ENCODE measurements at regions of chr22 and their contacts with region 1.

Region 1: DNA sequence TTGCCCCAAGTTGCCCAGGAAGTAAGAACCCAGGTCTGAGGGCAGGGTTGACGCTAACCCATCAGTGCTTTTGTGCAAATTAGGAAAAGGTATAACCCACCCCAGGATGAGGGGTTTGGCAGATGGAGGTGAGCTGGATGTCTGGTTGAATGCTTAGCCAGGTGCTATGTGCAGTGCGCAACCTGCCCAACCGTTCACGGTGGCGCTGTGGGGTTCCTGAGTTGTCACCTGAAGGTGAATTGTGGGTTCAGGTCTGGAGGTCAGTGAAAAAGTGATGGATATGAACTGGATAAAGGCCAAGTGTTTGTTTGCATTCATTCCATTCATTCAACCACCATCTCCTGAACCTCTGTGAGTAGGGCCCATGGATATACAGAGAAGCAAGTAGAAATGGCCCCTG is 14.3 kb upstream of the LGALS2 start:
- DNase-seq: peak in 1 of 10 donors; percentile 8
- ATAC-seq: no peak
- H3K4me3 Mint-ChIP-seq: no peak overlapping the region
- H3K27ac Mint-ChIP-seq: no peak overlapping the region
- H3K4me1 Mint-ChIP-seq: peaks cover 8 to 15% (median 13%) of the 10 kb centered on the region in 4 donors
- H3K27me3 Mint-ChIP-seq: no peaks in the 10 kb centered on the region

Region 2: GRCh38 chr22:37538590-37539357 is 55.5 kb before region 1 on chr22:
- POLR2A ChIA-PET with region 1: interaction called, 20 read pairs
- DNase-seq: peak; percentile 80 to 93 (median 86)
- ATAC-seq: peak; percentile 99 to 100
- H3K4me3 Mint-ChIP-seq: peak overlapping the region in 6 of 10 donors; percentile 37 to 81 (median 62)
- H3K27ac Mint-ChIP-seq: peak overlapping the region in 2 of 10 donors; percentile 21 to 29
- H3K4me1 Mint-ChIP-seq: peaks cover 13 to 31% (median 24%) of the 10 kb centered on the region in 4 donors
- H3K27me3 Mint-ChIP-seq: peaks cover 8 to 43% (median 15%) of the 10 kb centered on the region in 5 donors

Region 3: DNA sequence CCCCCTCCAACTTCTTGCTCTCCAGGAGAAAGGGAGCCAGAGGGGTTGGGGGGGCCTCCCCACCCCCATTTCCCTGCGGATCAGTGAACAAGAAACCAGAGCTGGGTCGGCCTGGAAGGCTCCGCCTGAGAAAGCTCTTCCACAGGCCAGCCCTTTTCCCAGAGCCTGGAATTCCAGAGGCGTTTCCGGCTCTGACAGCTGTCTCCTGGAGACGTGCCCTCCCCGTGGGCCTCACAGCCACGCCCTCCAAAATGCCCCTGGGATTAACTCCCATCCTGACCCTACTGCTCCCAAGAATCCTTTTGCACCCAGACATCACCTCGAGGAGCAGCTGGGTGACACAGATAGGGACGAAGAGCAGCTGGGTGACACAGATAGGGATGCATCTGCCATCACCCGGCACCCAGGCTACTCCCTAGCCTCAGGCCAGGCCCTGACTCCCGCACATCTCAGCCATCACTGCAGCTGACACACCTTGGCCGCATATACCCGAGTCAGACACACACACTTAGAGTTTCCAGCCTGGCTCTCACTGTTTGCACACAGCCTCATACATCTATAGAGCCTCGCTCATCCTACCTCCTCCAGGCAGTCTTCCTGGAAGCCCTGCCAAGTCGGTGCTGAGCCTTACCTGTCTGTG is 41.6 kb before region 1 on chr22:
- POLR2A ChIA-PET with region 1: no interaction called
- DNase-seq: peak in 1 of 10 donors; percentile 57
- ATAC-seq: no peak
- H3K4me3 Mint-ChIP-seq: no peak overlapping the region
- H3K27ac Mint-ChIP-seq: peak overlapping the region in 2 of 10 donors; percentile 51 to 57
- H3K4me1 Mint-ChIP-seq: peaks cover 0 to 5% (median 2%) of the 10 kb centered on the region in 4 donors
- H3K27me3 Mint-ChIP-seq: peaks cover 0 to 27% (median 21%) of the 10 kb centered on the region in 5 donors

Region 4: GRCh38 chr22:37566903-37567820 is 27.1 kb before region 1 on chr22:
- POLR2A ChIA-PET with region 1: interaction called, 17 read pairs
- DNase-seq: peak; percentile 73 to 93 (median 86)
- ATAC-seq: peak; percentile 87 to 91
- H3K4me3 Mint-ChIP-seq: peak overlapping the region; percentile 52 to 84 (median 76)
- H3K27ac Mint-ChIP-seq: peak overlapping the region in 8 of 10 donors; percentile 19 to 80 (median 56)
- H3K4me1 Mint-ChIP-seq: peaks cover 9 to 36% (median 26%) of the 10 kb centered on the region in 4 donors
- H3K27me3 Mint-ChIP-seq: peaks cover 6 to 19% (median 15%) of the 10 kb centered on the region in 5 donors

Region 5: GRCh38 chr22:37581504-37581903 is 12.7 kb before region 1 on chr22:
- POLR2A ChIA-PET with region 1: interaction called, 11 read pairs
- DNase-seq: no peak
- ATAC-seq: no peak
- H3K4me3 Mint-ChIP-seq: no peak overlapping the region
- H3K27ac Mint-ChIP-seq: no peak overlapping the region
- H3K4me1 Mint-ChIP-seq: peaks cover 11 to 22% (median 16%) of the 10 kb centered on the region in 4 donors
- H3K27me3 Mint-ChIP-seq: peaks cover 0 to 7% (median 1%) of the 10 kb centered on the region in 5 donors

Region 6: GRCh38 chr22:37608477-37609239 is 14.4 kb after region 1 on chr22 and contains the start of gene GGA1:
- POLR2A ChIA-PET with region 1: interaction called, 50 read pairs
- DNase-seq: peak; percentile 92 to 99 (median 97)
- ATAC-seq: peak; percentile 74 to 78
- H3K4me3 Mint-ChIP-seq: peak within 1 kb of the TSS; percentile 88 to 96 (median 93)
- H3K27ac Mint-ChIP-seq: peak within 1 kb of the TSS; percentile 95 to 99 (median 98)
- H3K4me1 Mint-ChIP-seq: peaks cover 30 to 68% (median 62%) of the 10 kb centered on the region in 4 donors
- H3K27me3 Mint-ChIP-seq: no peaks in the 10 kb centered on the region
- polyA plus RNA-seq, gene GGA1: 20.3 to 24.5 (median 22.6) TPM

Region 7: DNA sequence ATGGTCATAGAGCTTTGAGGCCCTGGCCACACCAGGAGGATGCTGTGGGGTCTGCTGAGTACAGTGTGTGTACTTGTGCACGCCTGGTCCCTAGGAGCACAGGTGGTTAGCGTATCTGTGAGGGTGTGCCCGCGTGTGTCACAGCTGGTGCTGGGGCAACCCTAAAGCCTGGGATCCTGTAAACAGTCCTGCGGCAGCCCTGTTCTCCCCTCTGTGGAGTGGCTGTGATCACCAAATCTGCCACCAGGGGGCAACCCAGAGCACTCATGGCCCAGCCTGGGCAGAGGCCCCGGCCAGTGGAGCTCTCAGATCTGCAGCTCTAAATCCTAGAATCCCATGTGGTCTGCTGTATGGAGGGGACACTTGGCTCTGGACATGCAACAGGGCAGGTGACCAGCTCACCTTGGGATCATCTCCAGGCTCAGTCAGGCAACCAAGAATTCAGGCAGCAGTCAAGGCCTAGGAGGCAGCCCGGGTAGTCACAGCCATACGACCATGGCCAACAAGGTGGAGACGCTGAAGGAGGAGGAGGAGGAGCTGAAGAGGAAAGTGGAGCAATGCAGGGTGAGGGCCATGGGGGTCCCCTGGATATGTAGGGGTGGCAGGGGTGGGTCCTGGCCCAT is 49.1 kb after region 1 on chr22:
- POLR2A ChIA-PET with region 1: interaction called, 11 read pairs
- DNase-seq: peak; percentile 64 to 89 (median 82)
- ATAC-seq: peak; percentile 54 to 62
- H3K4me3 Mint-ChIP-seq: peak overlapping the region; percentile 44 to 97 (median 64)
- H3K27ac Mint-ChIP-seq: peak overlapping the region; percentile 80 to 92 (median 86)
- H3K4me1 Mint-ChIP-seq: peaks cover 15 to 60% (median 45%) of the 10 kb centered on the region in 4 donors
- H3K27me3 Mint-ChIP-seq: no peaks in the 10 kb centered on the region